Uterus (tissue), 4 donors: ENCODE measurements at regions of chr1 and their contacts with region 1.

Region 1: GRCh38 chr1:209583408-209583807 is at the start of gene CAMK1G:
- DNase-seq: no peak
- H3K4me3 ChIP-seq: peak within 1 kb of the TSS in 1 of 2 donors; percentile 26
- H3K27ac ChIP-seq: no peak within 1 kb of the TSS
- H3K4me1 ChIP-seq: no peaks in the 10 kb centered on the region
- H3K27me3 ChIP-seq: peaks cover 0 to 9% of the 10 kb centered on the region in 2 donors
- CTCF ChIP-seq: no peak
- POLR2A ChIP-seq: no peak
- total RNA-seq, gene CAMK1G: 0.43 to 5.6 TPM in 2 of 4 donors, not detected in the others

Region 2: DNA sequence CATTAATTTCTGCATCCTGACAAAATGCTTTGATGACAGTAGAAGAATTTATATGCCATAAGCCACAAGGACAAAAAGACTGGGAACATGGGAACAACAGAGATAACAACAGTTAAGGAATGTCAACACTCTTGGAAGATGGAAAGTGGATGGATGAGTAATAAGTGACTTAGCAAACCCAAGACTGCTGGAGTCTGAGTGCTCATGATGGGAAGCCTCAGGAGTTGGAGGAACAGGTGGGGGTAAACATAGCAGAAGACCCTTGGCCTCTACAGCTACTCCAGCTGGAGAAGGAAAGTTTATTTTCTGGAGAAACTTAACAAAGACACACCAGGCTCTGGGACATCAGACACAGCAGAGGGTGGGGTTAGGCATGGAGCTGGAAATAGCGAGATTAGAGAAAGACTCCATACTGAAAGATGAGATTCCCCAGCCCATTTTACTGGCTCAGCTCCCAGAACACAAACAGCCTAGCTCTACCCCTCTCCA is 105.4 kb after region 1 on chr1:
- intact Hi-C with region 1: loop called (anchors 5 kb)
- DNase-seq: no peak
- H3K4me3 ChIP-seq: no peak overlapping the region
- H3K27ac ChIP-seq: no peak overlapping the region
- H3K4me1 ChIP-seq: no peaks in the 10 kb centered on the region
- H3K27me3 ChIP-seq: no peaks in the 10 kb centered on the region
- CTCF ChIP-seq: no peak
- POLR2A ChIP-seq: no peak